RWPE1 (cell line): ENCODE measurements at regions of chr1 and their contacts with region 1.

Region 1: GRCh38 chr1:53697721-53698383 is 41.1 kb downstream of the GLIS1 start:
- DNase-seq: no peak
- H3K27ac ChIP-seq: no peak overlapping the region
- CTCF ChIP-seq: no peak

Region 2: DNA sequence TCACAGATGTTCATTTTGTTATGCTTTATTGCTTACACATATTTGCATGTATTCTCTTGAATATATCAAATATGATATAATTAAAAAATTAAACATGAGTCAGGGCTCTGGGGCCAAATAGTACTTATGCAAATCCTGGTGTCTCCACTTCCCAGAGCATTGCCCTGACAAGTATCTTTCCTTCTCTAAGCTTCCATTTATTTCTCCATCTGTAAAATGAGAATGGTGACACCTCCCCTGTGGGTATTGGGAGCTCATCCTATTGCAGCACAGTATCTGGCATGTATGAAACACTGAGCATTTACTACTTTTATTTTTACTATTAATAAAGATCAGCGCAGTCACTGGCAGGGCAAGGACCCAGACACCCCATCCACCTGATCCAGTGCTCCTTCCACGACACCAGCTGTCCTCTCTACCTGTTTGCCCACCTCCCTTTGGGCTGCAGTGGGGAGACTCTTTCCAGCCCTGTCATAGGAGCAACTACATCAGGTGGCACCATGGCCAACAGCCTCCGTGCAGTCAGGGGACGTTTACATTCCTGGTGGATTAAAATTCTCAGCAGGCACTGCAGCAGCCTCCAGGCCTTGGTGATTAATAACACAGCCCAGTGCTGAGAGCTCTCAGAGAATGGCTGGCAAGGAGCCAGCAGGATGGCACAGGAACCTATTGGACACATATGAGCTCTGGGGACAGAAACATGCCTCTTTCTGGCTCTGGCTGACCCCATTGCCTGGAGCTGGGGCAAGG is 125.6 kb before region 1 on chr1:
- CTCF ChIA-PET with region 1: no interaction called
- POLR2A ChIA-PET with region 1: no interaction called
- DNase-seq: peak; percentile 72
- H3K27ac ChIP-seq: peak overlapping the region; percentile 1; the same call in 1 of the 2 replicates
- CTCF ChIP-seq: no peak

Region 3: DNA sequence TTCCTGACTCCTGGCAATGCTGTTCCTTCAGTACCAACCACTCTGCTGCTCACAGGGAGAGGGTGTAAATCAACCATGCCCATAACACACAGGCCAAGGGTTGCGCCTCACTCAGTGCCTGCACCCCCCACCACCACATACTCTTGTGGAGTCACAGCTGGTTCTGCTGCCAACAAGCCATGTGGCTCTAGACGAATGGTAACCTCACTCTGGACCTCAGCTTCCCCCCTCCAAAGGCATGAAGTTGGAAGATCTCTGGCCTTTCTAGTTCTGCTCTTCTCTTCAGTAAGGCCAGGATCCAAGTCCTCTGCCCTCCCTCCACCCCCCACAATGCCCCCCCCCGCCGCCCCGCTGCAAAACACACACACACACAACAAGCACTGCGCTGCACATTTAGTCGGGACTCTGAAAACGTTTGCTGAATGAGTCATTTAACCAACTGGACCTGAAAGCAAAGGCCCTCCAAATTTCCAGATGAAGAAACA is 42.8 kb after region 1 on chr1:
- CTCF ChIA-PET with region 1: interaction called, 13 read pairs
- POLR2A ChIA-PET with region 1: no interaction called
- DNase-seq: no peak
- H3K27ac ChIP-seq: no peak overlapping the region
- CTCF ChIP-seq: no peak